Activated CD4-positive, alpha-beta T cell treated with anti-CD3 and anti-CD28 coated beads for 36 hours (primary cell): ENCODE measurements at regions of chr3 and their contacts with region 1.

Region 1: DNA sequence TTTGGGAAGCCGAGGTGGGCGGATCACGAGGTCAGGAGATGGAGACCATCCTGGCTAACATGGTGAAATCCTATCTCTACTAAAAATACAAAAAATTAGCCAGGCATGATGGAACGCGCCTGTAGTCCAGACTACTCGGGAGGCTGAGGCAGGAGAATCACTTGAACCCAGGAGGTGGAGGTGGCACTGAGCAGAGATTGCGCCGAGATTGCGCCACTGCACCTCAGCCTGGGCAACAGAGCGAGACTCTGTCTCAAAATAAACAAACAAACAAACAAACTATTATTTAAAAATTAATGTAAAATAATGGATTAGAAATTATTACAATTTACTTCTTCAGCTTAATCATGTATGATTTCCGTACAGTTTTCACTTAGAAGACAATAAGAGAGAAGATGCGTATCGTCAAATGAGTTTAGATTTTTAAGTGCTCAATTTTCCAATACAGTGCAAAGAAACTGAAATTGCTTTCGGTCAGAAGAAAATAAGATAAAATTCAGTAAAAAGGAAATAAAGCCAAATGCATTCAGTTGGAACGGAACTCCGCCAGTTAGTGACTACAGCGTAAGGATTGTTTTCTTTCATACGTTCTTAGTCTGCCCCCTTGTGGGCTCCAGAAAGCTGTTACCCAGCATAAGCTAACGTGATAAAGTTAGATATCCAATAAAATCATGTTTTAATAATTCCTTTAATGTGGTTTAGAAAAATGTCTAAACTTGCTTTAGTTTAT is 24.8 kb downstream of the AADAC start:
- DNase-seq: peak; percentile 56
- ATAC-seq: peak; percentile 69
- H3K4me3 Mint-ChIP-seq: no peak overlapping the region
- H3K27ac Mint-ChIP-seq: no peak overlapping the region
- H3K4me1 Mint-ChIP-seq: peaks cover 3% of the 10 kb centered on the region
- H3K27me3 Mint-ChIP-seq: peaks cover 7% of the 10 kb centered on the region

Region 2: GRCh38 chr3:151156618-151157216 is 682.0 kb before region 1 on chr3:
- CTCF ChIA-PET with region 1: interaction called, 4 read pairs
- POLR2A ChIA-PET with region 1: no interaction called
- intact Hi-C with region 1: loop called in 1 of 2 experiments (anchors 2 kb)
- DNase-seq: peak; percentile 46
- ATAC-seq: peak; percentile 92
- H3K4me3 Mint-ChIP-seq: no peak overlapping the region
- H3K27ac Mint-ChIP-seq: no peak overlapping the region
- H3K4me1 Mint-ChIP-seq: no peaks in the 10 kb centered on the region
- H3K27me3 Mint-ChIP-seq: peaks cover 4% of the 10 kb centered on the region

Region 3: DNA sequence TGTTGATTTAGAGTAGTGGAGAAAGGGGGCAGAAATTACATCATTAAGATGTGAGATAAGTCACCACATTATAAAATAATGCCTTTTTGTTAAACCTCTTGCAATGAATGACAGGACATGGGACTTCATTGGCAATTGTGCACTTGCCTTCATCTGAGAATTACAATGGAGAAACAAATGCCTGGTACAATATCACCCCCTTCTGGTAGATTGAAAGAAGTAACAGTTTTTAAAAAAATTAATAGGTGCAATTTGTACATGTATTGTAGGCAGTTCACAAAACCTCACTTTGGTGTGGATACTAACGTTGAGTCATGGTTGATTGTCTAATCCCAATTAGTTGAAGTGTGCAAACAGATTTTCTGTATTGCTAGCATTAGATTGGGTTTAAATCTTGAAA is 555.8 kb before region 1 on chr3:
- CTCF ChIA-PET with region 1: interaction called, 5 read pairs
- POLR2A ChIA-PET with region 1: no interaction called
- intact Hi-C with region 1: loop called in 1 of 2 experiments (anchors 5 kb)
- DNase-seq: no peak
- ATAC-seq: peak; percentile 57
- H3K4me3 Mint-ChIP-seq: no peak overlapping the region
- H3K27ac Mint-ChIP-seq: no peak overlapping the region
- H3K4me1 Mint-ChIP-seq: peaks cover 29% of the 10 kb centered on the region
- H3K27me3 Mint-ChIP-seq: no peaks in the 10 kb centered on the region

Region 4: DNA sequence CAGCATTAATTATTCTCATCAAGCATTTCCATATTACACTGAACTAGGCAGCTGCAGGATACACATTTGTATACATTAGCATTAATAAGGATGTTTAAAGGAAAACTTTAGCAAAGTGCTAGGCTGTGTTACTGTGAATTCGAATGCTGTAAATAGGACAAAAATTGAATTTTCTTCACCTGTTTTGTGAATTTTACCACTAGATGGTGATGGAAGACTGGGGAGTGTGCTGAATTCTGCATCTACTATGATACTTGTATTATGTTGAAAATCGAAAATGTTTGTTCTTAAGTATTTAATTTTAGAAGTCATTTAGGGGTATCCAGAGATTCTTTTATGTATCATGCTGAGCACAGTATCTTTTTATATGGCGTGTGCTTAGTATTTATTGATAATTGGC is 548.1 kb before region 1 on chr3:
- CTCF ChIA-PET with region 1: interaction called, 8 read pairs
- POLR2A ChIA-PET with region 1: no interaction called
- intact Hi-C with region 1: loop called in 1 of 2 experiments (anchors 1 kb)
- DNase-seq: no peak
- ATAC-seq: no peak
- H3K4me3 Mint-ChIP-seq: no peak overlapping the region
- H3K27ac Mint-ChIP-seq: no peak overlapping the region
- H3K4me1 Mint-ChIP-seq: peaks cover 4% of the 10 kb centered on the region
- H3K27me3 Mint-ChIP-seq: no peaks in the 10 kb centered on the region

Region 5: DNA sequence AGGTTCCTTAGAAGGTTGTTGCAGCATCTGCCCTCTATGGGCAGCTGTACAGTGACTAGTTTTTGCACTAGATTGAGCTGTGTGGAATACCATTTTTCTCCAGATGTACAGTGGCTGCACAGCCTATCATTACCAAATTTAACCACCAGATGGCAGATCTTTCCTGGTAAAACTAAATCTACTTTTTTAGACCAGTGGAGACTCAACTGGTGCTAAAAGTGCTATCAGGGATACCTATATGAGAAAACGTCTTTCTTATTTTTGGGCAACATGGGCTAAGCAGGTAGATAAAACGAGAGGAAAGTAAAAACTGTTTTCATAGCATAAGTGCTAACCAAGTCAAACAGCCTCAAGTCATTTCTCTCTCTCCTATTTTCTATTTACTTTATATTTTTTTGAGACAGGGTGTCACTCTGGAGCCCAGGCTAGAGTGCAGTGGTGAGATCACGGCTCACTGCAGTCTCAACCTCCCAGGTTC is 399.1 kb before region 1 on chr3:
- CTCF ChIA-PET with region 1: interaction called, 42 read pairs
- POLR2A ChIA-PET with region 1: no interaction called
- intact Hi-C with region 1: loop called (anchors 1 kb)
- DNase-seq: no peak
- ATAC-seq: peak; percentile 58
- H3K4me3 Mint-ChIP-seq: no peak overlapping the region
- H3K27ac Mint-ChIP-seq: no peak overlapping the region
- H3K4me1 Mint-ChIP-seq: no peaks in the 10 kb centered on the region
- H3K27me3 Mint-ChIP-seq: no peaks in the 10 kb centered on the region

Region 6: DNA sequence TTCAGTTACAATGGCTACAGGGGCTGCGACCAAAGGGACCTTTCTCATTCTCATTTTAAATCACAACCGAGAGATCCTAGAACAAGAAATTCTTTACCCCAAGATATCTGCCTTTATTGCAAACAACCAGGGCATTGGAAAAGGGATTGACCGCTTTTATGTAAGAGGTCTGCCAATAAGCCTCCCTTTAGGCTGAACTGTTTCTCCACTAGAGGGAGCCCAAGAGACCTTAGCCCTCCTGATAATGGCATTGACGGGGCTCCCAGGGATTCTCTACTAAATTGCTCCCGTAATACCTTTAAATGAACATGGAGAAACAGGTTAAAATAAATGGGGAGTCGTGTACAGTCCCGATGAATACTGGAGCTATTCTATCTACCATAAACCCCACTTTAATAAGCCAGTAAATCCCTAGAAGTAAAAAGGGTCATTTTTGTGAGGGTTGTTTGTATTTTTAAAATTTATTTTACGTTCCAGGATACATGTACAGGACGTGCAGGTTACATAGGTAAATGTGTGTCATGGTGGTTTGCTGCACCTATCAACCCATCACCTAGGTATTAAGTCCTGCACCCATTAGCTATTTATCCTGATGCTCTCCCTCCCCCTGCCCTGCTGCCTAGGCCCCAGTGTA is 370.3 kb before region 1 on chr3:
- CTCF ChIA-PET with region 1: interaction called, 13 read pairs
- POLR2A ChIA-PET with region 1: no interaction called
- intact Hi-C with region 1: loop called (anchors 1 kb)
- DNase-seq: peak; percentile 46
- ATAC-seq: peak; percentile 70
- H3K4me3 Mint-ChIP-seq: no peak overlapping the region
- H3K27ac Mint-ChIP-seq: no peak overlapping the region
- H3K4me1 Mint-ChIP-seq: no peaks in the 10 kb centered on the region
- H3K27me3 Mint-ChIP-seq: peaks cover 2% of the 10 kb centered on the region

Region 7: GRCh38 chr3:151918253-151919029 is 79.7 kb after region 1 on chr3:
- CTCF ChIA-PET with region 1: interaction called, 7 read pairs
- POLR2A ChIA-PET with region 1: no interaction called
- intact Hi-C with region 1: loop called in 1 of 2 experiments (anchors 1 kb)
- DNase-seq: no peak
- ATAC-seq: no peak
- H3K4me3 Mint-ChIP-seq: no peak overlapping the region
- H3K27ac Mint-ChIP-seq: no peak overlapping the region
- H3K4me1 Mint-ChIP-seq: no peaks in the 10 kb centered on the region
- H3K27me3 Mint-ChIP-seq: no peaks in the 10 kb centered on the region